Activated CD4-positive, alpha-beta memory T cell treated with anti-CD3 and anti-CD28 coated beads for 36 hours (primary cell): ENCODE measurements at regions of chr5 and their contacts with region 1.

Region 1: GRCh38 chr5:159156426-159157238 is 52.7 kb downstream of the RNF145 start:
- DNase-seq: no peak
- H3K4me3 Mint-ChIP-seq: no peak overlapping the region
- H3K27ac Mint-ChIP-seq: peak overlapping the region; percentile 38
- H3K4me1 Mint-ChIP-seq: peaks cover 32% of the 10 kb centered on the region
- H3K27me3 Mint-ChIP-seq: no peaks in the 10 kb centered on the region

Region 2: DNA sequence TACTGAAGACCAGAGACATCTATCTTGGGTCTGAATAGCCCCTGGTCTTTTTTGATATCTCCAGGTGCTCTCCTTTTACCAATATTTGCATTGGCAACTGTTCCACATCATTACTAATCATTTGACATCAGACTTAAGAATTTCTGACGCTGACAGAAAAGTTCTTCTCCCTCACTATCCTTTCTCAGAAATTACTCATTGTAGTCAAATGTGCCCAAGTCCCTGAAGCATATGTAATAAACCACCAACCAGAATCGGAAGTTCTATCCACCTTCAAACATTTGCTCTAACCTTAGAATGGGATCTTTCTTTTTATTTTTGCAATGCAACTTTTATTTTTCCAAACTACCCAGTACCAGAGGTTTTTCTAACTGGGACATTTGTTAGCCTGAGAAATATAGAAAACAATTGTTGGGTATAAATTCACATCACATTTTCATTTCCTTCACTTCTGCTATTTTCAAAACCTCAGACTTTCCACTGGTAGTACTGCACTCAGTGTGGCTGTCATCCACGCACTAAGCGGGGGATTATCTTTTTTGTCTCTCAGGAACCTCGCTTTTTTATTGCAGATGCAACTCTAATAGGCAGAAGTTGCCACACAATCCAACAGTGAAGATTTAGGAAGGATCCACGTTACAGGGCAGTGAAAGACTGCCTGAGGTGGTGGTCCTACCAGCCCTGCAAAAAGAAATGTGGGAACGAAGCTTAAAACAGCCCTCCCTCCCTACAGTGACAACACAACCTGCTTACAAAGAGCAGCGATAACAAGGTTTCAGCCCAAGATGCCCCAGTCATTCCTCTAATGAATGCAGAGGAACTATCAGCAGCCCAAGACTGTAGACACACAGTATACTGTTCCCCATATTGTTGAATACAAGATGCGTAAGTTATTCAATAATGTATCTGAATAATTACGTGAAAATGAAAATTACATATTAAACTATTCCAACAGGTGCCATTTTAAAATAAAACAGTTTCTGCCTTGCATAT is 258.2 kb before region 1 on chr5:
- CTCF ChIA-PET with region 1: no interaction called
- POLR2A ChIA-PET with region 1: no interaction called
- intact Hi-C with region 1: no loop called
- DNase-seq: no peak
- H3K4me3 Mint-ChIP-seq: no peak overlapping the region
- H3K27ac Mint-ChIP-seq: no peak overlapping the region
- H3K4me1 Mint-ChIP-seq: no peaks in the 10 kb centered on the region
- H3K27me3 Mint-ChIP-seq: peaks cover 7% of the 10 kb centered on the region

Region 3: DNA sequence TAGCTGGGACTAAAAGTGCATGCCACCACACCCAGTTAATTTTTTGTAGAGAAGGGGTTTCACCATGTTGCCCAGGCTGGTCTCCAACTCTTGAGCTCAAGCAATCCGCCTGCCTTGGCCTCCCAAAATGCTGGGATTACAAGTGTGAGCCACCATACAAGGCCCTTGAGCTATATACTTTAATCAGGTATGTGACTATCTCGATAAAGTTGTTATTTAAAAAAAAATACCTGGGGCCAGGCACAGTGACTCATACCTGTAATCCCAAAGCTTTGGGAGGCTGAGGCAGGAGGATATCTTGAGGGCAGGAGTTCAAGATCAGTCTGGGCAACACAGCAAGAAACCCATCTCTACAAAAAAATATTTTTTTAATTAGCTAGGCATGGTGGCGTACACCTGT is 33.5 kb after region 1 on chr5:
- CTCF ChIA-PET with region 1: interaction called, 18 read pairs
- POLR2A ChIA-PET with region 1: no interaction called
- intact Hi-C with region 1: no loop called
- DNase-seq: no peak
- H3K4me3 Mint-ChIP-seq: no peak overlapping the region
- H3K27ac Mint-ChIP-seq: no peak overlapping the region
- H3K4me1 Mint-ChIP-seq: peaks cover 50% of the 10 kb centered on the region
- H3K27me3 Mint-ChIP-seq: no peaks in the 10 kb centered on the region

Region 4: GRCh38 chr5:159262859-159263567 is 106.4 kb after region 1 on chr5 and contains the start of gene UBLCP1:
- CTCF ChIA-PET with region 1: interaction called, 14 read pairs
- POLR2A ChIA-PET with region 1: no interaction called
- intact Hi-C with region 1: loop called (anchors 1 kb)
- DNase-seq: peak; percentile 88
- H3K4me3 Mint-ChIP-seq: peak within 1 kb of the TSS; percentile 97
- H3K27ac Mint-ChIP-seq: peak within 1 kb of the TSS; percentile 94
- H3K4me1 Mint-ChIP-seq: peaks cover 35% of the 10 kb centered on the region
- H3K27me3 Mint-ChIP-seq: no peaks in the 10 kb centered on the region
- total RNA-seq, gene UBLCP1: 32.9 to 34.4 TPM

Region 5: GRCh38 chr5:159316519-159317383 is 160.1 kb after region 1 on chr5:
- CTCF ChIA-PET with region 1: interaction called, 128 read pairs
- POLR2A ChIA-PET with region 1: no interaction called
- intact Hi-C with region 1: loop called (anchors 1 kb)
- DNase-seq: peak; percentile 58
- H3K4me3 Mint-ChIP-seq: no peak overlapping the region
- H3K27ac Mint-ChIP-seq: no peak overlapping the region
- H3K4me1 Mint-ChIP-seq: no peaks in the 10 kb centered on the region
- H3K27me3 Mint-ChIP-seq: no peaks in the 10 kb centered on the region

Region 6: GRCh38 chr5:159987031-159987674 is 830.5 kb after region 1 on chr5:
- CTCF ChIA-PET with region 1: interaction called, 21 read pairs
- POLR2A ChIA-PET with region 1: no interaction called
- intact Hi-C with region 1: loop called (anchors 5 kb)
- DNase-seq: peak; percentile 82
- H3K4me3 Mint-ChIP-seq: peak overlapping the region; percentile 45
- H3K27ac Mint-ChIP-seq: no peak overlapping the region
- H3K4me1 Mint-ChIP-seq: peaks cover 3% of the 10 kb centered on the region
- H3K27me3 Mint-ChIP-seq: peaks cover 18% of the 10 kb centered on the region